ENCODE measurements at regions of chr6 and their contacts with region 1.

Region 1: GRCh38 chr6:158762787-158763433 is 56.3 kb downstream of the EZR start:
- DNase-seq: no peak
- H3K4me3 ChIP-seq: no peak overlapping the region
- H3K4me3 Mint-ChIP-seq: no peak overlapping the region
- H3K27ac Mint-ChIP-seq: peak overlapping the region; percentile 21
- H3K4me1 ChIP-seq: peaks cover 11% of the 10 kb centered on the region; the same call in 1 of the 2 replicates
- H3K4me1 Mint-ChIP-seq: peaks cover 20% of the 10 kb centered on the region
- H3K27me3 ChIP-seq: no peaks in the 10 kb centered on the region
- H3K27me3 Mint-ChIP-seq: no peaks in the 10 kb centered on the region
- CTCF ChIP-seq: no peak

Region 2: DNA sequence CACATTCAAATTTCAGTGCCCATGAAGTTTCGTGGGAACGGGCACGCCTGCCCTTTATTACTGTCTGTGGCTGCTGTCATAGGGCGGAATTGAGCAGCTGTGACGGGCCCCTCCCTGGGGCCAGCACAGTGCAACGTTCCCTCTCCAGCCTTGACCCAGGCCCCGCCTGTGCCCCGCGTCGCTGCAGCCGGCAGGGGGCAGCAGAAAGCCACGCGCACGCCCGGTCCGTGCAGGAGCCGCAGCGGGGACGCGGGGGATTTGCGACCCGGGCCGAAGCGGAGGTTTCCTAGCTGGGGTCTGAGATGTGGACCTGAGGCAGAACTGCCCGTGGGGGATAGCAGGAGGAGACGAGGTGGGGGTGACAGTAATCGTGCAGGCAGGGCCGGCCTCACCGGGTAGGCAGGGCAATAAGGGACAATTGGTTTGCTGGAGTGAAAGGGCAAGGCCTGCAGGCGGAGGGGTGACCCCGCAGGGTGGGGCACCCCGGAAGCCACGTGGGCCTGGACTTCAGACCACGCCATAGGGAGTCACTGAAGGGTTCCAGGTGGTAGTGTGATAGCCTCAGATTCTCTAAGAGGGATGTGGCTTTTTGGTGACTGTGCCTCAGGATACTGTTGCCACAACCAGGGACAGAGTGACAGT is 58.6 kb before region 1 on chr6:
- CTCF ChIA-PET with region 1: interaction called, 3 read pairs
- POLR2A ChIA-PET with region 1: no interaction called
- intact Hi-C with region 1: loop called (anchors 2 kb)
- DNase-seq: peak; percentile 80 to 89
- H3K4me3 ChIP-seq: peak overlapping the region; percentile 47
- H3K4me3 Mint-ChIP-seq: peak overlapping the region; percentile 84
- H3K27ac Mint-ChIP-seq: peak overlapping the region; percentile 92
- H3K4me1 ChIP-seq: peaks cover 43% of the 10 kb centered on the region
- H3K4me1 Mint-ChIP-seq: peaks cover 21% of the 10 kb centered on the region
- H3K27me3 ChIP-seq: no peaks in the 10 kb centered on the region
- H3K27me3 Mint-ChIP-seq: no peaks in the 10 kb centered on the region
- CTCF ChIP-seq: peak; percentile 91 to 96

Measured in Caco-2 (cell line).